Activated CD4-positive, alpha-beta T cell treated with anti-CD3 and anti-CD28 coated beads, Interleukin-2, amount 10 ng/mL, durations not matched to agents 24 days and 14 days (primary cell): ENCODE measurements at regions of chr9 and their contacts with region 1.

Region 1: GRCh38 chr9:15135164-15135792 is 171.7 kb downstream of the TTC39B start:
- DNase-seq: peak; percentile 86
- H3K4me3 Mint-ChIP-seq: no peak overlapping the region
- H3K27ac Mint-ChIP-seq: no peak overlapping the region
- H3K4me1 Mint-ChIP-seq: peaks cover 3% of the 10 kb centered on the region
- H3K27me3 Mint-ChIP-seq: peaks cover 3% of the 10 kb centered on the region

Region 2: DNA sequence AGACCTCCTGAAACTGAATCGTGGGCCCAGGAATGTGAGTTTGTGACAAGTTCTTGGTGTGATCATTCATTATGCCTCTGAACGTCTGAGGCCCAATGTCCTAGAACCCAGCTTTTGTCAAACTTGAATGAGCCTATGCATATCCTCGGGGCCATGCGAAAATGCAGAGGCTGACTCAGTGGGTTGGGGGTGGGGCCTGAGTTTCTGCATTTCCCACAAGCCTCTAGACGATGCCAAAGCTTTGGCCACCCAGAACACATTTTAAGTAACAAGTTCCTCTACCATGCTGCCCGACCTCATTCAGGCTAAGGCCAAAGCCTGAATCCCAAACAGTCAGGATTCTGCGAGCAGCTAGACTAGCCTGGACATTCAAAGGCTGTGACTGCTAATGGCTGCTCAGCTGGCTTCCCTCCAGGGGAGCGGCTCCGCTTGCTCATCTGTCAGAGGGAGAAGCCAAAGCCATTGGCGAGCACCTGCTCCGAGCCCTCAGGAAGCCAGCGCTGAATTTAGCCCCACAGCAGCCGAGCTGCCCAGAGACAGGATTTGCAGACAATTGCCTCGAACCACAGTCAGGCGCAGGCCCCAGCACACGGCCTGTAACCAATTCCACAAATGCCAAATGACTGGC is 619.6 kb before region 1 on chr9:
- intact Hi-C with region 1: no loop called
- DNase-seq: no peak
- H3K4me3 Mint-ChIP-seq: no peak overlapping the region
- H3K27ac Mint-ChIP-seq: no peak overlapping the region
- H3K4me1 Mint-ChIP-seq: no peaks in the 10 kb centered on the region
- H3K27me3 Mint-ChIP-seq: no peaks in the 10 kb centered on the region

Region 3: DNA sequence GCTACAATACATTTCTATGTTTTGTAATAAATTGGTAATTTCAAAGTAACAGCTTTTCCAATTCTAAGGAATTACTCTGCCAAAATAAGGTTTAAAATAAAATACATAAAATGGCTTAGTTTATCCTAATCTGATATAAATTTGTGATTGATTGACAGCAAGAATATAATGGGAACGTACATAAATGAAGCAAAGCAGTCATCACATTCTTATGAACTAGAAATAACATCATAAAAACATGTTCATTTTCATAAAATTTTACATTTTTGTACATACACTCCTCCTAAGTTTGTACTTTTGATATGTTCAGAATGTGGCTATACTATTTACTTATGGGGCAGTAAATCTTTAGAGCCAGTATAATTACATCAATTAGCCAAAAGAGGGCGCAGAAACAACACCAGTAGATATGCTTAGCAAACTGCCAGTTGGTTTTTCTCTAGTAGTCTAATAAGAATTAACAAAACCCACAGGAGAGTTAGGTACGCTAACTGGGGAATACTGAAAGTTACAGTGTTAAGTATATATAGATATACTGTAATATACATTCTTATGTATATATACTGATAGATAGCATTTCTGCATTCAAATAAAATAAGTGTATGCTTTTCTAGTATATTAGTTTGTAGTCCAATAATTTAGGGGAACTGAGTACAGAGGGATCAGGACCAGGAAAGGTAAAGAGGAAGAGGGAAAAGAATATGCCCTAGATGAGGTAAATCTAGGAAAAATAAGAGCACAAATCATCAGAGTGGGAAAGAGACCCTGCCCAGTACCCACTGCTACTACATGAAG is 518.9 kb before region 1 on chr9:
- intact Hi-C with region 1: loop called (anchors 10 kb)
- DNase-seq: no peak
- H3K4me3 Mint-ChIP-seq: no peak overlapping the region
- H3K27ac Mint-ChIP-seq: no peak overlapping the region
- H3K4me1 Mint-ChIP-seq: no peaks in the 10 kb centered on the region
- H3K27me3 Mint-ChIP-seq: no peaks in the 10 kb centered on the region

Region 4: GRCh38 chr9:14693206-14693861 is 441.9 kb before region 1 on chr9 and contains the start of gene ZDHHC21:
- intact Hi-C with region 1: no loop called
- DNase-seq: peak; percentile 88
- H3K4me3 Mint-ChIP-seq: peak within 1 kb of the TSS; percentile 96
- H3K27ac Mint-ChIP-seq: peak within 1 kb of the TSS; percentile 95
- H3K4me1 Mint-ChIP-seq: peaks cover 33% of the 10 kb centered on the region
- H3K27me3 Mint-ChIP-seq: peaks cover 20% of the 10 kb centered on the region
- total RNA-seq, gene ZDHHC21: 11.2 and 11.6 TPM in 2 replicates

Region 5: GRCh38 chr9:14846871-14847311 is 288.4 kb before region 1 on chr9:
- intact Hi-C with region 1: loop called (anchors 1 kb)
- DNase-seq: peak; percentile 87
- H3K4me3 Mint-ChIP-seq: no peak overlapping the region
- H3K27ac Mint-ChIP-seq: no peak overlapping the region
- H3K4me1 Mint-ChIP-seq: no peaks in the 10 kb centered on the region
- H3K27me3 Mint-ChIP-seq: peaks cover 9% of the 10 kb centered on the region

Region 6: DNA sequence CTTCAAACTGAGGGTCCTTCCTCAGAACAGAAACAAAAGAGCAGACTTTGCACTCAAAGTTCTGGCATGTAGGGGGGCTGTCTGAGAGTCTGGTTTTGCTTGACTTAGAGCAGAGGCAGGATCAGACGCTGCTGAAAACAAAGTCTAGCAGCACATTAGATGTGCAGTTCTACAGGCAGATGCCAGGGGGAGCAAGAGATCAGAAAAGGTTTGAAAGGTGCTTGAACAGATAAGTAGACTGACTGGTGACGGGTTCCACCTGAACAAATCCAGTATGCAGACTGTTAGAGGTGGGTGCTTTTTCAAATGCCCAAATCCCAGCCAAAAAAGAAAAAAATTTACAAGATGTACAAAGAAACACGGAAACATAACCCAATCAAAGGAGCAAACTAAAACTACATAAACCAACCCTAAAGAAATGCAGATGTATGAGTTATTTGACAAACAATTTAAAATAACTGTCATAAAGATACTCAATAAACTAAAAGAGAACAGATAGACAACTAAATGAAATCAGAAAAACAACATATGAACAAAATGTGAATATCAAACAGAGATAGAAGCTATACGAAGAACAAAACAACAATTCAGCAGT is 30.4 kb before region 1 on chr9:
- intact Hi-C with region 1: loop called (anchors 1 kb)
- DNase-seq: peak; percentile 84
- H3K4me3 Mint-ChIP-seq: no peak overlapping the region
- H3K27ac Mint-ChIP-seq: no peak overlapping the region
- H3K4me1 Mint-ChIP-seq: no peaks in the 10 kb centered on the region
- H3K27me3 Mint-ChIP-seq: peaks cover 11% of the 10 kb centered on the region